ENCODE measurements at regions of chr17 and their contacts with region 1.

Region 1: DNA sequence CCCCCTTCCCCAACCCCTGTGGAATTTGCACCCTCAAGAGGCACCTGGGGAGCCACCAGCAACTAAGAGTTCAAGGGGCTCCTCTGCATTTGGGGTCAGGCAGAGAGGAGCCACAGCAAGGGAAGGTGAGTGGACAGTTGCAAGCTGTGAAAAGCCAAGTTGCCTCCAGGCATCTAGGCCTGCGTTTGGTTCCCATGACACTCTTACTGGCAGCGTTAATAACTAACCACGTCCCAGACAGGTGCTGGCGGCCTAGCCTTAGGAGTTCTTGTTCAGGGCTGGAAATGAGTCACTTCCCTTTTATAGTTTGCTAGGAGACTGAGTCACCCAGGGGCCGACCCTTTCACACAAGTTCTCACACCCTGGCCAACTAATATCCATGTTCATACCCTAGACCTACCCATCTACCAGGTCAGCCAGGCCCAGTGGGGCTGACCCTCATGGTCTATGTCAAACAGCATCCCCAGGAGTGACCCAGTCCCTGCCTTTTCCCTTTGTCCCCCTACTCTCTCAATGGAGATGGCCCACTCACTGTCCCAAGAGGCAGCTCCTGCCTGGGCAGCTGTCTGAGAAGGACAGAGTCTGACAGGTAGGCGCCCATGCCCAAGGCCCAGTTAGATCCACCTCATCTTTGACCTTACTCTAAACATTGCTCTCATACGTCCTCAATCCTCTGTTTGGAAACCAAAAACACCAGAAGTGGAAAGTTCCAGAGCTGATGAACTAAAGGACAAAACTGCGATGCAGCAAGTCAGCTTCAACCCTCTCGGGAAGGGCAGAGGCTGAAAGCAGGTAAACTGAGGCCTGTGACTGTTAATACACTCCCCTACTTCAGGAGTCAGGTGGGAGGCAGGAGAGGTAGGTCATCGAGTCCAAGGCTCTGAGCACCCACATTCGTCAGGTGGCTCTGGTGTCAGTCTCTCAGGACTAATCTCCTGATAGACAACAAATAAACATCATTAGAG is 300.6 kb downstream of the SOX9 start:
- DNase-seq: peak; percentile 21
- ATAC-seq: peak; percentile 48
- H3K4me3 Mint-ChIP-seq: peak overlapping the region; percentile 39
- H3K27ac Mint-ChIP-seq: peak overlapping the region; percentile 78
- H3K4me1 Mint-ChIP-seq: peaks cover 56% of the 10 kb centered on the region
- H3K27me3 Mint-ChIP-seq: no peaks in the 10 kb centered on the region
- CTCF ChIP-seq: no peak

Region 2: DNA sequence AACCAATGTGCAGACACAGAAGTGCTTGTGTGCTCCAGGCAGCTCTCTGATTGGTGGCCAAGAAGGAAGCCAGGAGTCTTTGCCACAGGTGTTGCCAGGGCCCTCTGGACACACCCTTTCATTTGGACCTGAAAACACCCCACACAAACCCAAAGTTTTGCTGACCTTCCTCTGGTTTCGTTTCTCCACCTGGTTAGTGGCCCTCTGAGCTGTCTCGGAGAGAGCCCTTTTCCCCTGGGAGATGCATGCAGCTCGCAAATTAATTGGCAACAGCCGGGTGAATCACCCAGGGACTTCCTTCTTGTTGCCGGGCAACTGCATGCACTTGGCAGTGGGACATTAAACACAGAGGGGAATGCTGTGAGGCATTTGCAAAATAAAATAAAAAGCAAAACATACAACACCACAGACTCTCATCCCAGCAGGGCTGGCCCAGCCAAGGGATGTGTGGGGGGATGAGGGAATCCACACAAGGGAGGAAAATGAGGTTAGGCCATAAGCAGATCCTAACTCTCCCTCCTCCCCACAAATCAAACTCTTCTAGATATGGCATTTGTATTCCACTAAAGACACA is 14.0 kb before region 1 on chr17:
- CTCF ChIA-PET with region 1: no interaction called
- POLR2A ChIA-PET with region 1: interaction called, 3 read pairs
- intact Hi-C with region 1: loop called (anchors 1 kb)
- DNase-seq: no peak
- ATAC-seq: peak; percentile 84
- H3K4me3 Mint-ChIP-seq: peak overlapping the region; percentile 12
- H3K27ac Mint-ChIP-seq: no peak overlapping the region
- H3K4me1 Mint-ChIP-seq: peaks cover 13% of the 10 kb centered on the region
- H3K27me3 Mint-ChIP-seq: no peaks in the 10 kb centered on the region
- CTCF ChIP-seq: no peak

Region 3: GRCh38 chr17:72465191-72466024 is 44.0 kb after region 1 on chr17:
- CTCF ChIA-PET with region 1: no interaction called
- POLR2A ChIA-PET with region 1: interaction called, 3 read pairs
- intact Hi-C with region 1: loop called (anchors 2 kb)
- DNase-seq: no peak
- ATAC-seq: peak; percentile 40
- H3K4me3 Mint-ChIP-seq: no peak overlapping the region
- H3K27ac Mint-ChIP-seq: no peak overlapping the region
- H3K4me1 Mint-ChIP-seq: no peaks in the 10 kb centered on the region
- H3K27me3 Mint-ChIP-seq: no peaks in the 10 kb centered on the region
- CTCF ChIP-seq: no peak

Region 4: DNA sequence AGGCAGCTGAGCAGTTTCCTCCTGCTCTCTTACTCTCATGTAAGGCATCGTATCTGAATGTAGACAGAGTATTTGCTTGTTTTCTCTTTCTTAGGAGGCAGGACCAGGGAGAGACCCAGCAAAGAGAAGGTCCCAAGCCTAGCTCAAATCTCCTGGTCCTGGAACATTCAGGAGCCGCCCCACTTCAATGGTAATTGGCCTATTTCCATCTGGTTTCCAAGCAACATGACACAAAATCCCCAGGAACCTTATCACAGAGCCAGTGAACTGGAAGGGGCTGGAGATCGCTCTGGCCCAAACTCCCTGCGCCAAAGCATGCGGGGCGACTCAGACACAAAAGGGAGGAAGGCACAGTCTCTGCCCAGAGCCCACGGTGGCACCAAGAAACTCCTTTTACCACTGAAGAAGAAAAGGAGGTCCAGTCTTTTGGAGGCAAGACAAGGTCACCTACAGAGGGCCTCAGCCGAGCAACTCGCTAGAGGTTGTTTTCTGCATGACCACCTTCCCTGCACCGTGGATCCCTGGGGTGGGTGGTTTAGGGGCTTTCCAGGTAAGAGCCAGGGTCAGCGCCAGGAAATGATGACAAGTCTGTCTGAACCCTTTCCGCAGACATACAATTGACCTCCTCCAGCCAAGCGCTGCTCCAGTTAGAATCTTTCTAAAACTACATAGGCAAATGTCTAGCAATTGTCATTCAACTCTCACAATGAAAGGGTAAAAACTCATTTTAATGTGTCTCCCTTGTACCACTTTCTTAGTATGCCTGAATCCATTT is 94.1 kb after region 1 on chr17:
- CTCF ChIA-PET with region 1: no interaction called
- POLR2A ChIA-PET with region 1: no interaction called
- intact Hi-C with region 1: loop called (anchors 2 kb)
- DNase-seq: no peak
- ATAC-seq: peak; percentile 34
- H3K4me3 Mint-ChIP-seq: no peak overlapping the region
- H3K27ac Mint-ChIP-seq: no peak overlapping the region
- H3K4me1 Mint-ChIP-seq: peaks cover 4% of the 10 kb centered on the region
- H3K27me3 Mint-ChIP-seq: no peaks in the 10 kb centered on the region
- CTCF ChIP-seq: no peak

Region 5: GRCh38 chr17:72538901-72539352 is 117.5 kb after region 1 on chr17:
- CTCF ChIA-PET with region 1: no interaction called
- POLR2A ChIA-PET with region 1: no interaction called
- intact Hi-C with region 1: no loop called
- DNase-seq: no peak
- ATAC-seq: no peak
- H3K4me3 Mint-ChIP-seq: no peak overlapping the region
- H3K27ac Mint-ChIP-seq: no peak overlapping the region
- H3K4me1 Mint-ChIP-seq: peaks cover 4% of the 10 kb centered on the region
- H3K27me3 Mint-ChIP-seq: peaks cover 22% of the 10 kb centered on the region
- CTCF ChIP-seq: no peak

Region 6: GRCh38 chr17:72699545-72699944 is 278.1 kb after region 1 on chr17:
- CTCF ChIA-PET with region 1: no interaction called
- POLR2A ChIA-PET with region 1: no interaction called
- intact Hi-C with region 1: no loop called
- DNase-seq: no peak
- ATAC-seq: no peak
- H3K4me3 Mint-ChIP-seq: no peak overlapping the region
- H3K27ac Mint-ChIP-seq: no peak overlapping the region
- H3K4me1 Mint-ChIP-seq: no peaks in the 10 kb centered on the region
- H3K27me3 Mint-ChIP-seq: no peaks in the 10 kb centered on the region
- CTCF ChIP-seq: no peak